Sciatic nerve (tissue), 2 donors: ENCODE measurements at regions of chr3 and their contacts with region 1.

Region 1: GRCh38 chr3:24725589-24726255 is 231.1 kb upstream of the THRB start:
- DNase-seq: no peak
- ATAC-seq: no peak

Region 2: GRCh38 chr3:24714436-24714835 is 11.3 kb before region 1 on chr3:
- intact Hi-C with region 1: loop called (anchors 1 kb)
- DNase-seq: no peak
- ATAC-seq: no peak

Region 3: GRCh38 chr3:25021816-25022215 is 296.1 kb after region 1 on chr3:
- intact Hi-C with region 1: no loop called
- DNase-seq: no peak
- ATAC-seq: peak; percentile 80